Activated CD4-positive, alpha-beta T cell treated with anti-CD3 and anti-CD28 coated beads for 36 hours (primary cell): ENCODE measurements at regions of chr18 and their contacts with region 1.

Region 1: GRCh38 chr18:63131106-63131958 is 188.2 kb downstream of the BCL2 start:
- DNase-seq: peak; percentile 69
- ATAC-seq: peak; percentile 60
- H3K4me3 Mint-ChIP-seq: no peak overlapping the region
- H3K27ac Mint-ChIP-seq: peak overlapping the region; percentile 74
- H3K4me1 Mint-ChIP-seq: peaks cover 29% of the 10 kb centered on the region
- H3K27me3 Mint-ChIP-seq: no peaks in the 10 kb centered on the region

Region 2: DNA sequence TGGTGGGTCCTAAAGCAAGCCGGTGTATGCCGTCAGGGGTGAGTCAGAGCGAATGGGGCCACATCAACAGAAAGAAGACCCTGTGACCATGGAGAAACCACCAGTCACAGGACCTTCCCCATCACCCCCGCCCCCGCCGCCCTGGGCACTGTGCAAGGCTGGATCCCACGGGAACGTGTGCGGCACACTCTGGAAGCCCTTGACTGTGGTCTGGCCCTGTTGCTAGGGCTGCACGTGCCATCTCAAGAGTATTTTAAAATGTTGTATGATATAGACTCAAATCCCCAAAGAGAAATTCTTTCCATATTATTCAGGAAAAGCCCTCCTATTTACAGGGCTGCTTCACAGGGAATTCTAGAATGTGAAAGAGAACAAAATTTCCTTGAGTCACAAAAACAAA is 13.4 kb after region 1 on chr18:
- CTCF ChIA-PET with region 1: interaction called, 12 read pairs
- POLR2A ChIA-PET with region 1: no interaction called
- intact Hi-C with region 1: no loop called
- DNase-seq: no peak
- ATAC-seq: no peak
- H3K4me3 Mint-ChIP-seq: no peak overlapping the region
- H3K27ac Mint-ChIP-seq: no peak overlapping the region
- H3K4me1 Mint-ChIP-seq: peaks cover 27% of the 10 kb centered on the region
- H3K27me3 Mint-ChIP-seq: no peaks in the 10 kb centered on the region

Region 3: GRCh38 chr18:63311118-63312018 is 180.0 kb after region 1 on chr18:
- CTCF ChIA-PET with region 1: interaction called, 11 read pairs
- POLR2A ChIA-PET with region 1: no interaction called
- intact Hi-C with region 1: no loop called
- DNase-seq: no peak
- ATAC-seq: no peak
- H3K4me3 Mint-ChIP-seq: no peak overlapping the region
- H3K27ac Mint-ChIP-seq: peak overlapping the region; percentile 7
- H3K4me1 Mint-ChIP-seq: peaks cover 82% of the 10 kb centered on the region
- H3K27me3 Mint-ChIP-seq: no peaks in the 10 kb centered on the region